CD8-positive, alpha-beta memory T cell (primary cell): ENCODE measurements at regions of chr10 and their contacts with region 1.

Region 1: DNA sequence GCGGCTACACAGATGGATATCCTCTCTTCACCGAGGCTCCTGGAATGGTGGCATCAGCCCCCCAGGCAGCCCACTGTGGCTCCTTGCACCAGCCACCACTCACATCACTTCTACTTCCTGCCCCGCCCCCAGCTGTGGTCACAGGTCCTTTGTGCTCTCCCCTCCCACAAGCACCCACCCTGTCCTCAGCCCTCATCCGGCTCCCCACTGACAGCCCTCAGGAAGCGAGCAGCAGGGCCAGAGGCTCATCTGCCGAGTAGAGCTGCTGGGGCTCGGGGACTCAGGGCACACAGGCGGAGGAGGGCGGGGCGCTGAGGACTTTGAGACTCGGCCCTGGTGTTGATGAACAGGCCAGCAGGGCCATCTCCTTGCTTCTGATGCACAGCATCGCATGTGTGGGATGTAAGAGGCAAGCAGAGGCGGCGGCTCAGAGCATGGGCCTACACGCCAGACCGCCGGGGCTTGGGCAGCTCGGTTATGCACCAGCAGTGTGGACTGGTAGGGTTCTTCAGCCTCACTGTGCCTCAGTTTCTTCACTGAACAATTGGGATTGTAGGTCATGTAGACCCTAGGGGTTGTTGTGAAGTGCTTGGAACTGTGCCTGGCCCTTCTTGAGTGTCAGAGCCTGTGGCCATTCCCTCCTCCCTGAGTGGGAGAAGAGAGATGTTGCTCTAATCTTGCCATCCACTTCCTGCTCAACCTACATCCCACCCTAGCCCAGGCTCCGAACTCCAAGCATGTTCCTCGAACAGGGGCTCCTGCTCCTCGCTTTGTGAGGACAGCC is at the start of gene PRF1:
- DNase-seq: peak; percentile 78 to 94 (median 86)
- H3K4me3 ChIP-seq: peak within 1 kb of the TSS; percentile 66
- H3K4me3 Mint-ChIP-seq: peak within 1 kb of the TSS; percentile 94 to 100 (median 99)
- H3K27ac ChIP-seq: peak within 1 kb of the TSS; percentile 70
- H3K27ac Mint-ChIP-seq: peak within 1 kb of the TSS; percentile 91 to 99 (median 97)
- H3K4me1 ChIP-seq: peaks cover 61% of the 10 kb centered on the region
- H3K4me1 Mint-ChIP-seq: peaks cover 57 to 78% (median 59%) of the 10 kb centered on the region in 3 donors
- H3K27me3 ChIP-seq: no peaks in the 10 kb centered on the region
- H3K27me3 Mint-ChIP-seq: no peaks in the 10 kb centered on the region
- total RNA-seq, gene PRF1: 94.8 to 95.7 TPM

Region 2: GRCh38 chr10:70508912-70509756 is 93.7 kb before region 1 on chr10:
- CTCF ChIA-PET with region 1: no interaction called
- POLR2A ChIA-PET with region 1: no interaction called
- DNase-seq: no peak
- H3K4me3 ChIP-seq: no peak overlapping the region
- H3K4me3 Mint-ChIP-seq: no peak overlapping the region
- H3K27ac ChIP-seq: no peak overlapping the region
- H3K27ac Mint-ChIP-seq: no peak overlapping the region
- H3K4me1 ChIP-seq: no peaks in the 10 kb centered on the region
- H3K4me1 Mint-ChIP-seq: no peaks in the 10 kb centered on the region
- H3K27me3 ChIP-seq: no peaks in the 10 kb centered on the region
- H3K27me3 Mint-ChIP-seq: peaks cover 8 to 9% of the 10 kb centered on the region in 2 donors

Region 3: GRCh38 chr10:70578371-70578947 is 24.4 kb before region 1 on chr10:
- CTCF ChIA-PET with region 1: interaction called, 3 read pairs
- POLR2A ChIA-PET with region 1: interaction called, 14 read pairs
- DNase-seq: peak; percentile 27 to 84 (median 83)
- H3K4me3 ChIP-seq: no peak overlapping the region
- H3K4me3 Mint-ChIP-seq: peak overlapping the region; percentile 26 to 76 (median 54)
- H3K27ac ChIP-seq: peak overlapping the region; percentile 36
- H3K27ac Mint-ChIP-seq: peak overlapping the region; percentile 82 to 98 (median 92)
- H3K4me1 ChIP-seq: peaks cover 50% of the 10 kb centered on the region
- H3K4me1 Mint-ChIP-seq: peaks cover 52 to 58% (median 53%) of the 10 kb centered on the region in 3 donors
- H3K27me3 ChIP-seq: no peaks in the 10 kb centered on the region
- H3K27me3 Mint-ChIP-seq: no peaks in the 10 kb centered on the region

Region 4: GRCh38 chr10:70672165-70673042 is 69.5 kb after region 1 on chr10 and contains the start of gene ADAMTS14:
- CTCF ChIA-PET with region 1: no interaction called
- POLR2A ChIA-PET with region 1: no interaction called
- DNase-seq: peak in 1 of 5 donors; percentile 4
- H3K4me3 ChIP-seq: peak within 1 kb of the TSS; percentile 40
- H3K4me3 Mint-ChIP-seq: peak within 1 kb of the TSS; percentile 54 to 92 (median 71)
- H3K27ac ChIP-seq: peak within 1 kb of the TSS; percentile 85
- H3K27ac Mint-ChIP-seq: peak within 1 kb of the TSS in 2 of 8 donors; percentile 32 to 85
- H3K4me1 ChIP-seq: no peaks in the 10 kb centered on the region
- H3K4me1 Mint-ChIP-seq: peaks cover 10 to 14% (median 13%) of the 10 kb centered on the region in 3 donors
- H3K27me3 ChIP-seq: peaks cover 4% of the 10 kb centered on the region
- H3K27me3 Mint-ChIP-seq: peaks cover 26 to 48% of the 10 kb centered on the region in 2 donors
- total RNA-seq, gene ADAMTS14: not detected